Ascending aorta (tissue), 2 donors: ENCODE measurements at regions of chr18 and their contacts with region 1.

Region 1: DNA sequence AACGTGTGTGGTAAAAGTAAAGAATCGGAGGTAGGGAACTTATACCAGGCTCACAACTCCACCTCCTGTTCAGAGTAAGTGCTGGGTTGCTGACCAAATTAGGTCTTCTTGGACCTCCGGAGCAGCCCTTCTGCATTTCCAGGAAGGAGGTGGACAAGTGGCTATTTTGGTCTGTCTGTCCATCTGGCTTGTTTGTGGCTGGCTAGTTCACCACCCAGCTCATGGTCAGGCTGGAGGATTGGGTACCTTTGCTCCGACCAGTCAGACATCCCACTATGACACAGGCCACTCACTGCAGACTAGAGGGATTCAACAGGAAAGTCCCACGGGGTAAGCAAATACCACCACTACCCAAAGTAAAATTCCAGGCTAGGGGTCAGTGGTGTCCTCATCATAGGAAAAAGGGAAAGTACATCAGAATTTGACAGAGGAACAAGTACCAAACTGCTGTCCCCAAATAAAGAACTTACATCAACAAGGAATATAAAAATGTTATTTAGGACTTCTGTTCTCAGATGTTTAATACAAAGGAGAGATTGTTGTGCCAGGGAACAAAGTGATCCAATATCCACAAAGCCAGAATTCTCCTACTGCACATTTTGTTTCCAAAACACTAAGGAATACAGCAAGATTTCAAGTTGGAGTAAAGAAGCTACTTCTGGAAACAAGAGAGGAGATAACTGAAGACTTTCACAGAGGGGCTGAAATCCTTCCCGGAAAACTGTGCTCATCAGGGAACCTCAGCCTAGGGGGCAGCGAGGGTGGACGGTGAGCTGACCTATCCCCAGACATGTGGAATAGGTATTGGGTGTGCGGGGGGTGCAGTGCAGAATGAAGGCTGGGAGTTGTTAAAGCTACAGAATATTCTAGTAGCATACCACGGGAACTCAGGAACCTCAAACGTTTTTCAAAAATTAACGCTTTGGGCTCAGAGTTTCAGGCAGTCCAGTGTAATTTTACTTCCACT is 56.9 kb downstream of the BCL2 start:
- DNase-seq: peak; percentile 65 to 91
- H3K4me3 ChIP-seq: peak overlapping the region; percentile 7 to 31
- H3K27ac ChIP-seq: peak overlapping the region; percentile 85 to 94
- H3K4me1 ChIP-seq: peaks cover 0 to 20% of the 10 kb centered on the region in 2 donors
- H3K27me3 ChIP-seq: no peaks in the 10 kb centered on the region
- CTCF ChIP-seq: peak; percentile 28 to 45 (median 33)

Region 2: DNA sequence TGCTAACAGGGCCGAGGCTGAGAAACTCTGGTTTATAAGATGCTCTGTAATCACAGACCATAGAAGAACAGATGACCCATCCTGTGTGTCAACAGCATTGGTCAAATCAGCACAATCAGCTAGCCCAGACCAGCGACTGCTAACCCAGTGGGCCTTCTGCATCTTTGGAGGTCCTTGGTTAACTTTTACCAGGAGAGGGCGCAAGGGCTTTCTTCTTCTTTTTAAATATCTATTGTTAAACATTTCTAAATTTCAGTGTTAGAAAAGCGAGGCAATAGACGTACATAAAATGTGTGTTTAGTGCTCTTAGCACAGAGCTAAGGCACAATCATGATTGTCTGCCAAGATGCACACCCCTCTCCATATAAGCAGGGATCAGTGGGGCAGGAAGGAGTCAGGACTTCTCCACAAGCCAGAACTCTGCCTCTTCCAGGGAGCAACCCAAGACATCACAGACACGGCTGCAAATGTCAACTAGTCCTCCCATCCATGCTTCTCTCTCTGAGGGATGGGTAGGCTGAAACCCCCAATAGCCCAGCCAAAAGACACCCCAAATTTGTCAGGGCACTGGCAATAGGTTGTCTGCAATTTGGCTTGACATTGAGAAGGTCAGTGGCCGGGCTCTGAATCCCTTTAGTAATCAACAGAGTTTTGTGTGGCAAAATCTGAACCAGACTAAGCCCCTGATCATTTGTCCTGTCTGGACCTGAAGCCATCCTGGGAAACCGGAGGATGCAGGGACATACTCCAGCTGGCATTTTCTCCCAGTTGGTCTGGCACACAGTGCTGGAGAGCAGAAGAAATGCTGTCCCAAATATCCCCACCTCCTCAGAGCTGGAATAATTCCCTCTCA is 131.3 kb before region 1 on chr18:
- intact Hi-C with region 1: loop called (anchors 2 kb)
- DNase-seq: peak in 1 of 2 donors; percentile 87
- H3K4me3 ChIP-seq: no peak overlapping the region
- H3K27ac ChIP-seq: peak overlapping the region; percentile 56 to 64
- H3K4me1 ChIP-seq: peaks cover 0 to 11% of the 10 kb centered on the region in 2 donors
- H3K27me3 ChIP-seq: no peaks in the 10 kb centered on the region
- CTCF ChIP-seq: peak; percentile 70 to 80 (median 75)

Region 3: DNA sequence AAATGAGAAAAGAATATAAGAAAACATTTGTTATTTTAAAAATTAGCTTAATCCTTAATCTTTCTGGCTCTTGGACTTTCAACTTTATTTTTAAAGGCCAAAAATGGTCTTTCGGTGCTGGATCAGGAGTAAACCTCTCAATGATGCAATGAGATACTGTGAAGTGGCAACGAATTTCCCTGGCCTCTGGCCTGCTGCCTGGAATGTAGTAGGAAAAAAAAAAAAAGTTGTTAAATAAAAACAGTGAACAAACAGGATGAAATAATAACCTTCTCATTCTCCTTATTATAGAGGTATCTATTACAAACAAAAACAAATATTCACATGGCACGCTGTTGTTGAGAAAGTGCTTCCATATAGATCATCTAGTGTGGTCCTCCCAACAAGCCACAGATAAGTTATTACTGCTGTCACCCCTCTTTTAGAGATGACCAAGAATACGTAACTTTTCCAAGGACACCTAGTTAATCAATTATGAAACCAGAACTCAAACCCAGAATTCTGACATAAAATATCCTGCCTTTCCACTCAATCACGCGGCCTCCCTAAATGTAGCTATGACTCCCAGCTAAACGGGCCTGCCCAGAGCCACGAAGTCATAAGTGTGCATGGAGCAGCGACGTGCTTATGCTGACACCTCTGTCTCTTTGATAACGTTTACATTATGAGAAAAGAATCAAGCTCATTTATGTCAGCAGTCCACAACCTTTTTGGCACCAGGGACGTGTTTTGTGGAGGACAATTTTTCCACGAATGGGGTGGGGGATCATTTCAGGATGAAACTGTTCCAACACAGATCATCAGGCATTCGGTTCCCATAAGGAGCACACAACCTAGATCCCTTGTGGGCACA is 114.0 kb before region 1 on chr18:
- intact Hi-C with region 1: loop called (anchors 5 kb)
- DNase-seq: peak in 1 of 2 donors; percentile 79
- H3K4me3 ChIP-seq: no peak overlapping the region
- H3K27ac ChIP-seq: peak overlapping the region; percentile 7 to 75
- H3K4me1 ChIP-seq: peaks cover 3 to 50% of the 10 kb centered on the region in 2 donors
- H3K27me3 ChIP-seq: no peaks in the 10 kb centered on the region
- CTCF ChIP-seq: no peak

Region 4: GRCh38 chr18:63237881-63238667 is 24.6 kb before region 1 on chr18:
- intact Hi-C with region 1: loop called (anchors 1 kb)
- DNase-seq: peak in 1 of 2 donors; percentile 84
- H3K4me3 ChIP-seq: peak overlapping the region; percentile 15 to 18
- H3K27ac ChIP-seq: peak overlapping the region; percentile 91
- H3K4me1 ChIP-seq: peaks cover 0 to 24% of the 10 kb centered on the region in 2 donors
- H3K27me3 ChIP-seq: no peaks in the 10 kb centered on the region
- CTCF ChIP-seq: peak in 1 of 3 experiments; percentile 6

Region 5: GRCh38 chr18:63299837-63300745 is 37.4 kb after region 1 on chr18:
- intact Hi-C with region 1: loop called (anchors 5 kb)
- DNase-seq: no peak
- H3K4me3 ChIP-seq: no peak overlapping the region
- H3K27ac ChIP-seq: no peak overlapping the region
- H3K4me1 ChIP-seq: peaks cover 0 to 19% of the 10 kb centered on the region in 2 donors
- H3K27me3 ChIP-seq: no peaks in the 10 kb centered on the region
- CTCF ChIP-seq: no peak

Region 6: GRCh38 chr18:63367053-63367953 is 104.7 kb after region 1 on chr18 and contains the start of gene KDSR:
- intact Hi-C with region 1: loop called (anchors 1 kb)
- DNase-seq: peak; percentile 85 to 98
- H3K4me3 ChIP-seq: peak within 1 kb of the TSS; percentile 87 to 92
- H3K27ac ChIP-seq: peak within 1 kb of the TSS; percentile 98
- H3K4me1 ChIP-seq: peaks cover 2 to 19% of the 10 kb centered on the region in 2 donors
- H3K27me3 ChIP-seq: no peaks in the 10 kb centered on the region
- CTCF ChIP-seq: no peak
- total RNA-seq, gene KDSR: 208 TPM

Region 7: DNA sequence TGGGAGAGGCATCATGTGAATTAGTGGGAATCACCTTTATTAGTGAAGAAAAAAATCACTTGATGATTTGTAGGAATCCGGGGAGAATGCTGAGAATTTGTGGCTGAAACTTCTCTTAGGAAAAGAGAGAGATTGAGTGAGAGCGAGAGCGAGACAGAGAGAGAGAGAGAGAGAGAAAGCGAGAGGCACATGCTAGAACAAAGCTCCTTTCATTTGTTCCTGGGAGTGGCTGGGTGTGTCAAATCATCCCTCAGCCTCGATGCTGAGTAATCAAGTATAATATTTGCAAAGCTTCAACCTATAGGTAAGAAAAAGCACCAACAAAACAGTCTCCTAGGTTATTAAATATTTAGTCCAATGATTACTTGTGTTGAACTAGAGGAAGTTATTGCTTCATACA is 209.7 kb after region 1 on chr18:
- intact Hi-C with region 1: no loop called
- DNase-seq: no peak
- H3K4me3 ChIP-seq: no peak overlapping the region
- H3K27ac ChIP-seq: no peak overlapping the region
- H3K4me1 ChIP-seq: no peaks in the 10 kb centered on the region
- H3K27me3 ChIP-seq: no peaks in the 10 kb centered on the region
- CTCF ChIP-seq: no peak